AG04450 (cell line): ENCODE measurements at regions of chr17 and their contacts with region 1.

Region 1: GRCh38 chr17:75380315-75380714 is 25.2 kb downstream of the GRB2 start:
- DNase-seq: peak; percentile 32
- H3K4me3 ChIP-seq: no peak overlapping the region
- H3K27ac ChIP-seq: no peak overlapping the region
- H3K27me3 ChIP-seq: no peaks in the 10 kb centered on the region
- CTCF ChIP-seq: peak; percentile 26; the same call in 1 of the 2 replicates

Region 2: GRCh38 chr17:75331671-75332070 is 48.6 kb before region 1 on chr17:
- CTCF ChIA-PET with region 1: no interaction called
- POLR2A ChIA-PET with region 1: no interaction called
- DNase-seq: no peak
- H3K4me3 ChIP-seq: no peak overlapping the region
- H3K27ac ChIP-seq: no peak overlapping the region
- H3K27me3 ChIP-seq: no peaks in the 10 kb centered on the region
- CTCF ChIP-seq: no peak

Region 3: DNA sequence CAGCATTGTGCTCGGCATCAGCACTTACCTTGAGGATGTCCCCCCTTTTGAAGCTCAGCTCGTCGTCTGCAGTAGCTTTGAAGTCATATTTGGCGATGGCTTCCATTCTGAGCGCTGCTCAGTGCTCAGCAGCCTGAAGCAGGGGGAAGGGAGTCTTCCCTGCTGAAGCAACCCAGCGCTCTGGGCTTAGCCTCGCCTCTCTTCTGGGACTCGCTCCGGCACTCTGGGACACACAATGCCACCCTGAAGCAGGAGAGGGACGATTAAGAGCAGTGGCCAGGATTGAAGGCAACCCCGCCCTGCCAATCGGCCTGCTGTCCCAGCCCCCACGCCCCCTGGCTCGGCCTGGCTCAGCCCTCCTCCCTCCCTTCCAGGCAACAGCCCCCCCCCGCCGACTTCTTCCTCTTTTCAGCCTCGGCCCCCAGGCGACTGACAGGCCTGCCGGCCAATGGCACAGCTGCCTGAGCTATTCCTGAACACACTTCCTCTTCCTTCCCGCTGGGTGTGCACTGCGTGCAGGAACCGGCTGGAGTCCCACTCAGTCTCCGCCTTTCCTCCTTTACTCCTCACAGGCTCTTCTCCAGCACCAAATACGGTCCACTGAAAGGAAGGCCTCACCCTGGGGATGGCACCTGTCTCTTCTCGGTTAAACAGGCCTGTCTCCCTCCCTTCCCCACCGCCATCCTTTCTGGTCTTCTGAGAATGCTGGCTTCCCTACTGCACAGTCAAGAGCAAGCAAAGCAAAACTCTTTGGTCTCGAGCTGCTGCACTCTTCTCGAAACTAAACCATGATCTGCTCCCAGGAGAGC is 13.4 kb after region 1 on chr17:
- CTCF ChIA-PET with region 1: no interaction called
- POLR2A ChIA-PET with region 1: interaction called, 18 read pairs
- DNase-seq: peak; percentile 96
- H3K4me3 ChIP-seq: peak overlapping the region; percentile 80
- H3K27ac ChIP-seq: peak overlapping the region; percentile 71
- H3K27me3 ChIP-seq: no peaks in the 10 kb centered on the region
- CTCF ChIP-seq: no peak

Region 4: DNA sequence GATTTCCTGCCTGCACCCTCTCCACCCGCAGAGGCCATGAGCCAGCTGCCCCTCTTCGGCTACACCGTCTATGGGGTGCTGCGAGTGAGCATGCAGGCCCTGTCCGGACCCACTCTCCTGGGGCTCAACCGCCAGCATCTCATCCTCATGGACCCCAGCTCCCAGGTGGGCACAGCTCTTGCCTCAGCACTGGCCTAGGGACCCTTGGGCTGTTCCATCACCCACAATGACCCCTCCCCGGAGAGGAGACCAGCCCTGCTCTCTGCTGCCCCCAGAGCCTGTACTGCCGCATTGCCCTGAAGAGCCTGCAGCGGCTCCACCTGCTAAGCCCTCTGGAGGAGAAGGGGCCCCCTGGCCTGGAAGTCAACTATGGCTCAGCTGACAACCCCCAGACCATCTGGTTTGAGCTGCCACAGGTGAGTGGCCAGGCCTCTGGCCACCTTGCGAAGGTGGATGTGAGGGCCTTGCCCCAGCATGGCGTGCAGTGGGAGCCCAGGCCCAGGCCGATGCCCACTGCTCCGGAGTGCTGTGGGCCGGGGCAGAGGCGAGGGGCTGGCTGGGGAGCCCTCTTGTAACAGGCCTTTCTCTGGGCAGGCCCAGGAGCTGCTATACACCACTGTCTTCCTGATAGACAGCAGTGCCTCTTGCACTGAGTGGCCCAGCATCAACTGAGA is 245.6 kb after region 1 on chr17:
- CTCF ChIA-PET with region 1: interaction called, 11 read pairs
- POLR2A ChIA-PET with region 1: no interaction called
- DNase-seq: no peak
- H3K4me3 ChIP-seq: no peak overlapping the region
- H3K27ac ChIP-seq: no peak overlapping the region
- H3K27me3 ChIP-seq: peaks cover 8% of the 10 kb centered on the region
- CTCF ChIP-seq: peak; percentile 69